SK-N-SH (cell line): ENCODE measurements at regions of chr20 and their contacts with region 1.

Region 1: DNA sequence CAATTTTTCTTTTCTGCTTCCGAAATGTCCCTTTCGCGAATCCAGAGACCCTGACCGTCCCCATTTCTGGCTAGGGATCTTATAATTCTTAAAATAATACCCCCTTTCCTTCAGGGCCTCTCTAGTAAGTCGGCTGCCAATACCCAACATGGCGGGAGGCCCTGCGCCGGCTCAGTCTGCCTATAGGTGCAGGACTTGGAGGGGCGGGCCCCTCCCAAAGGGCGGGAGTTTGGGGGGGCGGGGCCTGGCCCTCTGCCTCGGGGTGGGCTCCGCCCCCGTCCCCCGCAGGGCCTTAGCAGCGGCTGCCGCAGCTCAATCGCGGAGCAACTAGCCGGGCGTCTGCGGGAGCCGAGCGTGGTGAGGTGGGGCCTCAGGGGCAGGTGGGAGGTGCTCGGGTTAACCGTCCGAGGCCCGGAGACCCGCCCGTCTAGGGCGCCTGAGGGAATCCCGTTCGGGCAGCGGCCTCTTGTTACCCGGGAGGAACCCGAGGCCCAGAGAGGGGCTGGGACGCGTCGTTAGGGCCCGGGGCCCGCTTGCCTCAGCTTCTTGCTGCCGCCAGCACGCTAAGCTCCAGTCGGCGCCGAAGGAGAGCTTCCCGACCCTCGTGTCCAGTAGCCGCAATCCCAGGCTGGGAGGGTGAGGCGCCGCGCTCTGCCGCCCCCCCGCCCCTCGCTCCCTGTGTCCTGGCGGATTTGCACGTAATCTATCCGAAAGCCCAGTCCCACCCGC is at the start of gene CEP250:
- DNase-seq: peak; percentile 96
- H3K4me3 ChIP-seq: peak within 1 kb of the TSS; percentile 78 to 93
- H3K27ac ChIP-seq: peak within 1 kb of the TSS; percentile 93 to 98
- H3K4me1 ChIP-seq: peaks cover 4 to 32% of the 10 kb centered on the region in 2 experiments; a peak in 3 of 4 replicates
- H3K27me3 ChIP-seq: no peaks in the 10 kb centered on the region
- CTCF ChIP-seq: no peak
- EP300 ChIP-seq: no peak
- RAD21 ChIP-seq: no peak
- polyA plus RNA-seq, gene CEP250: 13.3 and 14.6 TPM in 2 replicates

Region 2: DNA sequence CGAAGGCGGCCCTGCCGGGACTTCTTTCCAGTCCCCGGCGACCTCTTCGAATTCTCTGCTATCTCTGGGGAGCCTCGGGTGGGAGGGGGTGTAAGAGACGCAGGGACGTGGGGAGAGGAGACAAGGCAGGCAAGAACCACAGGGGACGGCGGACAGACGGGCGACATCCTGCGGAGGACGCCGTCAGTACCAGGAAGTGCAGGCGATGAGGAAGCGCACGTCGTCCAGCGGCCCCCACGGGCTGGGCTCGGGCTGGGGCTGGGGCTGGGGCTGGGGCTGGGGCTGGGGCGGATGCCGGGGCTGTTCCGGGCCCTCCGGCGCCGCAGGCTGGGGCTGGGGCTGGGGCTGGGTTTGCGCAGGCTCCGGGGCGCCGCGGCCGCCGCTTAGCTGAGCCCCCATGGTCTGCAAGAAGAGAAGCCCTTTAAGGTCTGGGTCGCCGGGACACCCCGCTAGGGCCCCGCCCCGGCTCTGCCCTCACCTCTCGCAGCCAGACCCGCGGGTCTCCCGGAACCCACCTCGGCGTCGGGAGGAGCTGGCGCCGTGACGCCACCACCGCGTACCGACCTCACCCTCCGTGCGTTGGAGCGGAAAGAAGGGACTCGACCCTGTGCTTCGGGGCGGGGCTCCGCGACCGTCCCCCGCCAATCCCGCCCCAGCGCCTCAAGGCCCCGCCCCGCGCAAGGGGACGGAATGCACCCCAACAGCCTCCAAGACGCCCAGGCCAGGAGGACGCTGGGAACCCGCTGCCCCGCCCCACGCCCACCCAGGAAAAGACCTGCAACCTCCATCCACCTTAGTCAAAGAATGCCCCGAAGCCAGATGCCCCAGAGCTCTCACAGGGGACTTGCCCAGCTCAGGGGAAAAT is 177.3 kb before region 1 on chr20 and contains the start of gene MMP24OS:
- CTCF ChIA-PET with region 1: no interaction called
- POLR2A ChIA-PET with region 1: interaction called, 11 read pairs
- DNase-seq: peak; percentile 97
- H3K4me3 ChIP-seq: peak within 1 kb of the TSS; percentile 75 to 85
- H3K27ac ChIP-seq: peak within 1 kb of the TSS; percentile 51 to 90
- H3K4me1 ChIP-seq: peaks cover 6 to 38% of the 10 kb centered on the region in 2 experiments; a peak in 3 of 4 replicates
- H3K27me3 ChIP-seq: no peaks in the 10 kb centered on the region
- CTCF ChIP-seq: peak; percentile 24
- EP300 ChIP-seq: no peak
- RAD21 ChIP-seq: 0 out of 2 replicates have a peak, but pooled peaks have one; percentile 4
- polyA plus RNA-seq, gene MMP24OS: 52.4 and 53.1 TPM in 2 replicates

Region 3: GRCh38 chr20:35410613-35411012 is 44.4 kb before region 1 on chr20:
- CTCF ChIA-PET with region 1: no interaction called
- POLR2A ChIA-PET with region 1: interaction called, 11 read pairs
- DNase-seq: no peak
- H3K4me3 ChIP-seq: peak overlapping the region; percentile 74 to 85
- H3K27ac ChIP-seq: no peak overlapping the region
- H3K4me1 ChIP-seq: peaks cover 0 to 3% of the 10 kb centered on the region in 2 experiments; a peak in 1 of 4 replicates
- H3K27me3 ChIP-seq: no peaks in the 10 kb centered on the region
- CTCF ChIP-seq: no peak
- EP300 ChIP-seq: no peak
- RAD21 ChIP-seq: no peak

Region 4: DNA sequence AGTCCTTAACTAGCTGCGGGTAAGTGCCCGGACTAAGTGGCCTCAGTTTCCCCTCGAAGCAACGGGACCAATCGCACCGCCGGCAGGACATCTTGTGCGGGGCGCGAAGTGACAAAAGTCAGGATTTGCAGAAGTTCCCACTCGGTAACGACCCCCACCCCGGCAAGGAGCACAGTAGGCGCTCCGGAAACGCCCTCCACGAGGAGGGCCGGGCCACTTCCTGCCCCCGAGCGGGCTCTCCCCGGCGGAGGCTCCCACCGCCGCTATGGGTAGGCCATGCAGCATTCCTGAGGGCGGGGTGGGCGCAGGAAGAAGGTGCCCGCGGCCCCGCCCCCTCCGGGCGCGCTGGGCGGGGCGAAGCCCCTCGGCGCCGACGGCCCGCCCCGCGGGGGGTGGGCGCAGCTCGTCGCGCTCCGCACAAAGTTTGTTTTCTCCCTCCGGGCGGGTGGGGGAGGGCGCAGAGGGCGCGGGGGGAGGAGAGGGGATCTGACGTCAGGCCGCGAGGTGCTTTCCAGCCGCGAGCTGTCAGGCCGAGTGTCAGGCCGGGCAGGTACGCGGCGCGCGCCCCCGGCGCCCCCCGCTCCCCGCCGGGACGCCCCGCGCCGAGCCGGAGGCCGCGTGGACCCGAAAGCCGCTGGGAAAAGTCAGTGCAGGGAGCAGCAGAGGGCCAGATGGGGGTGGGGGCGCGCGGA is 1118.2 kb after region 1 on chr20 and contains the start of gene TGIF2:
- CTCF ChIA-PET with region 1: no interaction called
- POLR2A ChIA-PET with region 1: interaction called, 11 read pairs
- DNase-seq: peak; percentile 96
- H3K4me3 ChIP-seq: peak within 1 kb of the TSS; percentile 65 to 77
- H3K27ac ChIP-seq: peak within 1 kb of the TSS; percentile 55 to 78
- H3K4me1 ChIP-seq: peaks cover 17 to 20% of the 10 kb centered on the region in 2 experiments; a peak in 3 of 4 replicates
- H3K27me3 ChIP-seq: no peaks in the 10 kb centered on the region
- CTCF ChIP-seq: no peak
- EP300 ChIP-seq: no peak
- RAD21 ChIP-seq: no peak
- polyA plus RNA-seq, gene TGIF2: 10.3 and 10.8 TPM in 2 replicates